Heart right ventricle (tissue), 16 donors: ENCODE measurements at regions of chr16 and their contacts with region 1.

Region 1: GRCh38 chr16:4388275-4389021 is 16.8 kb downstream of the VASN start:
- DNase-seq: peak; percentile 62 to 67
- ATAC-seq: peak; percentile 36 to 72 (median 46)
- H3K4me3 ChIP-seq: no peak overlapping the region
- H3K27ac ChIP-seq: peak overlapping the region; percentile 5 to 83 (median 80)
- H3K4me1 ChIP-seq: peaks cover 3 to 90% (median 38%) of the 10 kb centered on the region in 9 donors
- H3K27me3 ChIP-seq: no peaks in the 10 kb centered on the region
- CTCF ChIP-seq: no peak

Region 2: GRCh38 chr16:4373863-4374742 is 14.3 kb before region 1 on chr16:
- intact Hi-C with region 1: loop called in 1 of 10 experiments (anchors 2 kb)
- DNase-seq: peak; percentile 67 to 68
- ATAC-seq: peak in 5 of 8 donors; percentile 2 to 16 (median 7)
- H3K4me3 ChIP-seq: peak overlapping the region; percentile 38 to 71 (median 62)
- H3K27ac ChIP-seq: peak overlapping the region in 9 of 10 donors; percentile 65 to 88 (median 83)
- H3K4me1 ChIP-seq: peaks cover 42 to 97% (median 83%) of the 10 kb centered on the region in 9 donors
- H3K27me3 ChIP-seq: no peaks in the 10 kb centered on the region
- CTCF ChIP-seq: no peak